PC-3 (cell line): ENCODE measurements at regions of chr13 and their contacts with region 1.

Region 1: GRCh38 chr13:52652196-52652979 is at the start of gene SUGT1:
- DNase-seq: peak; percentile 92
- ATAC-seq: peak; percentile 97
- H3K4me3 ChIP-seq: peak within 1 kb of the TSS; percentile 97
- H3K27ac ChIP-seq: peak within 1 kb of the TSS; percentile 93
- H3K4me1 ChIP-seq: peaks cover 18% of the 10 kb centered on the region
- H3K27me3 ChIP-seq: no peaks in the 10 kb centered on the region
- CTCF ChIP-seq: peak; percentile 55
- total RNA-seq, gene SUGT1: 26.0 and 29.3 TPM in 2 replicates

Region 2: DNA sequence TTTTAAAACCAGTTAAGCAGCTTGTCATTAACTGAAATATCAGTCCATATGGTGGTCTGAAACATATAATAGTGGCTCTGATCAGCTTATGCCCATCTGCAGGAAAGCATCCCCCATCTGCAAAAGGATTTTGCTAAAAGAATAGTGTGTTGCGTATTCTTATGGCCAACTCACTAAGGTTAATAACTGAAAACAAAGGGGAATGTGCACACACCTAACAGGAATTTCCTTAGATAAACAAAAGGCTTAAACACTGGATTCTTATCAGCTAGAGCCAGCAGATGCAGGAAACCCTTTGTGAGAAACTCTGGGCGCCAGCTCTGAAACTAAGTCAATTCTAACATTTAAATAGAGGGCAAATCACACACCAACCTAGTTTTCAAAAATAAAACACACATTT is 224.1 kb before region 1 on chr13:
- CTCF ChIA-PET with region 1: no interaction called
- POLR2A ChIA-PET with region 1: no interaction called
- intact Hi-C with region 1: no loop called
- DNase-seq: peak; percentile 22
- ATAC-seq: peak; percentile 72
- H3K4me3 ChIP-seq: no peak overlapping the region
- H3K27ac ChIP-seq: no peak overlapping the region
- H3K4me1 ChIP-seq: no peaks in the 10 kb centered on the region; the same call in 1 of the 2 replicates
- H3K27me3 ChIP-seq: no peaks in the 10 kb centered on the region
- CTCF ChIP-seq: no peak

Region 3: GRCh38 chr13:52617070-52618060 is 35.0 kb before region 1 on chr13:
- CTCF ChIA-PET with region 1: interaction called, 4 read pairs
- POLR2A ChIA-PET with region 1: interaction called, 19 read pairs
- intact Hi-C with region 1: loop called (anchors 1 kb)
- DNase-seq: peak; percentile 81
- ATAC-seq: peak; percentile 96
- H3K4me3 ChIP-seq: peak overlapping the region; percentile 97
- H3K27ac ChIP-seq: peak overlapping the region; percentile 32; the same call in 1 of the 2 replicates
- H3K4me1 ChIP-seq: no peaks in the 10 kb centered on the region
- H3K27me3 ChIP-seq: no peaks in the 10 kb centered on the region
- CTCF ChIP-seq: no peak